ENCODE measurements at regions of chr10 and their contacts with region 1.

Region 1: DNA sequence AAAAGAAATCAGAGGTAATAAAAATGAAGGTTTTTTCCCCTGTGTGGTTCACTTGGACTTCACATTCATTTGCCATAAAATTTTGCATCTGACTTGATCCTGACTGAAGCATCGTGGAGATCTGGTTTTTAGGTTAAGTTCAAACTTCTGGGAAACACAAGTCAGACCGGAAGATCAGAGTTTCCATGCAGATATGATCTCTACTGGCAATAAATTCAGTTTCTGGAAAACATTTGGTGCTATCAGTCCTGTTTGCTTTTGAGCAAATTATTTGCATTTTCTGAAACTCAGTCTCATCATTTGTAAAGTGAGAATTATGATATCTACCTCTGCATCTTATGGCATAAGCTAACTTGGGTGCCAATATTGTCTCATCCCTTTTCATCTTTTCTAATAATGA is 81.3 kb upstream of the KCNMA1 start:
- DNase-seq: no peak
- H3K4me3 ChIP-seq: no peak overlapping the region
- H3K27ac ChIP-seq: no peak overlapping the region
- H3K4me1 ChIP-seq: no peaks in the 10 kb centered on the region
- CTCF ChIP-seq: no peak

Region 2: DNA sequence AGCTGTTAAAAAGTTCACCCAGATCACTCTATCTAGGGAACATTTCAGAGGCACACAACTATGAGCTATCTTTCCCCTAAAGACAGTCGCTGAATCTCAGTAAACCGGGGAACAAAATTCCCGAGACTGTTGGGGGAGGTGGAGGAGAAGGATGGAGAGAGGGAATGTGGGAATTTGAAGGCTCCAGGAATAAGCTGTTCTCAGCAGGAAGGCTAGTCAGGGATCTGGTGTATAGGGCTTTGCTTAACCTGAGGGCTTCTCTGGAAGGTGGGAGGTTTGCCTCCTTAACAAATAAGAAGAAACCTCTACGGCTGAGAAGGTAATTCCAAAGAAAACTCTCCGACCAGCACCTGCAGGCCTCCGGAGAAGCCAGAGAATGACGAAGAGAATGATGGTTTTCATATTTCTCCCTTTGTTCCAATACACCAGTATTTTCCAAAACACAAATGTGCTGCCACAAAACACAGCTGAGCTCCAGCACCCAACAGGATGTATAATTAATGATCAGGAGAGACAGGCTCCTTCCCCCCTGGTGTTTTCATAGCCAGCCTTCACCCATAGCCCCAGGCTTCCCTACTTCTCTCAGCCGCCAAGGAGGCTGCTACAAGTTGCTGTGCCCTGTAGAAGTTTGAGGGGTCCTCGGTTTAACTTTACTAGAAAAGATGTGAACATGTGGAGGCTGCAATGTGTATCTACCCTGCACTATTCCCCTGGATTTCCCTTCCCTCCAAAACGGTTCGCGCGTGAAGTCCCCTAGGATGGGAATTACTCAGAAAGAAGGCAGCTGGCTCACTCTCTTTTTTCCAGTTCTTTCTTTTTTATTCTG is 83.3 kb before region 1 on chr10:
- CTCF ChIA-PET with region 1: no interaction called
- POLR2A ChIA-PET with region 1: no interaction called
- intact Hi-C with region 1: no loop called
- DNase-seq: no peak
- H3K4me3 ChIP-seq: no peak overlapping the region
- H3K27ac ChIP-seq: no peak overlapping the region
- H3K4me1 ChIP-seq: no peaks in the 10 kb centered on the region
- CTCF ChIP-seq: no peak

Region 3: DNA sequence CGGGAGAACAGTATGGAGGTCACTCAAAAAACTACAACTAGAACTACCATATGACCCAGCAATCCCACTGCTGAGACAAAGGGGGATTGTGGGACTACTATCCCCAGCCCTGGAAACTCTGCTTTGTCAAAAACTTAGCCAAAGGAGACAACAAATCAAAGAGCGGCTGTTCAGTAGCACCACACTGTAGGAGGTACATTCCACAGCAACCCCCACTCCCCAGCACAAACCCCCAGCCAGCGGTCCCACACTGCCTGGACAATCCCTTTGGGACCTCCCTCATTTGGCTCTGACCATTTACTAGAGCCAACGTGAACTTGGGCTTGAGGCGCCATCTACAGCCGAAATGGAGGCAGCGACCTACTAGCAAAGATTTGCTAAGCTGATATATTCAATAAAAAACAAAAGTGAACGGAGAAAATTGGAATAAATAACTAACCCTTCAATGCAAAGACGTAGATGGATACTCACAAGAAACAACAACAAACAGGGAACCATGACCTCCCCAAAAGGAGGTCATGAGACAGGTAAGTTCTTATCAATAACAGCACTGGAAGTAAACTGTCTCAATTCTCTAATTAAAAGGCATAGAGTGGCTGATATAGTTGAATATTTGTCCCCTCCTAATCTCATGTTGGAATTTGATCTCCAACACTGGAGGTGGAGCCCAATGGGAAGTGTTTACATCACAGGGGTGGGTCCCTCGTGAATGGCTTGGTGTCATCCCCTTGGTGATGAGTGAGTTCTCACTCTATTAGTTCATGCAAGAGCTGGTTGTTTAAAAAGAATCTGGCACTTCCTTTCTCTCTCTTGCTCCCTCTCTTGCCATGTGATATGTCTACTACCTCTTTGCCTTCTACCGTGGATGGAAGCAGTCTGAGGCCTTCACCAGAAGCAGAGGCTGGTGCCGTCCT is 37.6 kb after region 1 on chr10:
- CTCF ChIA-PET with region 1: no interaction called
- POLR2A ChIA-PET with region 1: no interaction called
- intact Hi-C with region 1: loop called (anchors 1 kb)
- DNase-seq: peak; percentile 23
- H3K4me3 ChIP-seq: no peak overlapping the region
- H3K27ac ChIP-seq: no peak overlapping the region
- H3K4me1 ChIP-seq: no peaks in the 10 kb centered on the region
- CTCF ChIP-seq: peak; percentile 81

Region 4: GRCh38 chr10:77784856-77785255 is 65.9 kb after region 1 on chr10:
- CTCF ChIA-PET with region 1: no interaction called
- POLR2A ChIA-PET with region 1: no interaction called
- intact Hi-C with region 1: no loop called
- DNase-seq: no peak
- H3K4me3 ChIP-seq: no peak overlapping the region
- H3K27ac ChIP-seq: no peak overlapping the region
- H3K4me1 ChIP-seq: no peaks in the 10 kb centered on the region
- CTCF ChIP-seq: no peak

Region 5: DNA sequence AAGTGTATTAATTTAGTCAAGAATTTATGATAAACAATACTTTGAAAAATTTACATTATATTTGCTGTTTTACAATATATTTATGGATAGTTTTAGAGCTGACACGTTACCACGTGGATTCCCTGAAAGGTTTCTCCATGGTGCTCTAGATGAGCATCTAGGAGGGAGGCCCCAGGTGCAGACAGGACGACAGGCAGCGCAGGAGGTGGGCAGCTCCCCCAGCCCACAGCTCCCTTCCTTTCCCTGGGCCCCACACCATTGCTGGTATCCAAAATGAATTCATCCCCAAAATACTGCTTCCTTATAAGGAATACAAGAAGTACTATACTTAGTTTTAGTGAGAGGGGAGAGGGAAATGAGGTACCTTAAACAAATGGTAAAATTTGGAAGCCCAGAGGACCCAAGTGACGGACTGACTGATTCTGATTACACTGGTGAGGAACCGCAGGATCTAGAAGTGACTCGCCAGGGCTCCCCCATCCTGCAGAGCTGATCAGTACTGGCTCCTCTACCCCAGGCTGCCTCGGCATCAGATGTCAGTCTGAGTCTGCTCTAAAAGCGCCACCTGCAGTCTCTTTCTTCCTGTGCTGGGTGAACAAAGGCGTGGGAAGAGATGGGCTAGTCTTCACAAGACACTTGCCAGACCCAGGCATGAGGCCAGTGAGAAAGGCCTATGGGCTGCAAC is 118.4 kb after region 1 on chr10:
- CTCF ChIA-PET with region 1: no interaction called
- POLR2A ChIA-PET with region 1: interaction called, 3 read pairs
- intact Hi-C with region 1: loop called (anchors 2 kb)
- DNase-seq: peak; percentile 71
- H3K4me3 ChIP-seq: no peak overlapping the region
- H3K27ac ChIP-seq: no peak overlapping the region
- H3K4me1 ChIP-seq: peaks cover 16% of the 10 kb centered on the region
- CTCF ChIP-seq: peak; percentile 69

Region 6: GRCh38 chr10:77849039-77849664 is 130.2 kb after region 1 on chr10:
- CTCF ChIA-PET with region 1: no interaction called
- POLR2A ChIA-PET with region 1: no interaction called
- intact Hi-C with region 1: no loop called
- DNase-seq: peak; percentile 11
- H3K4me3 ChIP-seq: no peak overlapping the region
- H3K27ac ChIP-seq: no peak overlapping the region
- H3K4me1 ChIP-seq: no peaks in the 10 kb centered on the region
- CTCF ChIP-seq: no peak

Region 7: GRCh38 chr10:77873536-77874380 is 154.8 kb after region 1 on chr10:
- CTCF ChIA-PET with region 1: no interaction called
- POLR2A ChIA-PET with region 1: no interaction called
- intact Hi-C with region 1: no loop called
- DNase-seq: peak; percentile 85
- H3K4me3 ChIP-seq: no peak overlapping the region
- H3K27ac ChIP-seq: no peak overlapping the region
- H3K4me1 ChIP-seq: peaks cover 26% of the 10 kb centered on the region
- CTCF ChIP-seq: no peak

Measured in OCI-LY7 (cell line).